ENCODE measurements at regions of chr5 and their contacts with region 1.

Region 1: GRCh38 chr5:45038366-45038987 is 229.7 kb downstream of the MRPS30 start:
- DNase-seq: no peak
- H3K4me3 Mint-ChIP-seq: no peak overlapping the region
- H3K27ac Mint-ChIP-seq: no peak overlapping the region
- H3K4me1 Mint-ChIP-seq: no peaks in the 10 kb centered on the region
- H3K27me3 Mint-ChIP-seq: no peaks in the 10 kb centered on the region

Region 2: DNA sequence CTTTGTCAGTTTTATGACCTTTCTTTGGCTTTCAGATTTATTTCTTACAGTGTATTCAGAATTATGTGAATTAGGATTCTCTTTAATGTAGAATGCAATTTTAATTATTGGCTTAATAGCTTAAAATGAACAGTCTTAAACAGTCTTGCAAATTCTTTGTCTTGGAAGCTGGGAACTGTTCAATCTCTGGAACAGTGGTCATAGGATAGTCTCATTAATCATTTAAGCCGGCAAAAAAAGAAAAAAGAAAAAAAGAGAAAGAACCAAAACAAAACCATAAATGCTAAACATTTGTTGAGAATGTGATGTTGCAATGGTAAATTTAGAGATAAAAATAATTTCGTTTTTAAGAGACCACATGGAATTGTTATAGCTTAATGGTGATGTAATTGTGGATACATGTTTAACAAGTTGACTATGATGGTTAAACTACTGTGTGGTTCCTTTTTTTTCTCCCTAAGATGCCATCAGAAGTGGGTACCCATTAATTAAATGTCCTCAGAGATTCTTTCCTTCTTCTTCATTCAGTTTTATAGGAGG is 1373.9 kb before region 1 on chr5:
- CTCF ChIA-PET with region 1: no interaction called
- intact Hi-C with region 1: no loop called
- DNase-seq: no peak
- H3K4me3 Mint-ChIP-seq: no peak overlapping the region
- H3K27ac Mint-ChIP-seq: no peak overlapping the region
- H3K4me1 Mint-ChIP-seq: no peaks in the 10 kb centered on the region
- H3K27me3 Mint-ChIP-seq: no peaks in the 10 kb centered on the region

Region 3: GRCh38 chr5:44632344-44632743 is 406.1 kb before region 1 on chr5:
- CTCF ChIA-PET with region 1: no interaction called
- intact Hi-C with region 1: no loop called
- DNase-seq: no peak
- H3K4me3 Mint-ChIP-seq: no peak overlapping the region
- H3K27ac Mint-ChIP-seq: no peak overlapping the region
- H3K4me1 Mint-ChIP-seq: no peaks in the 10 kb centered on the region
- H3K27me3 Mint-ChIP-seq: no peaks in the 10 kb centered on the region

Region 4: GRCh38 chr5:44927115-44927734 is 111.3 kb before region 1 on chr5:
- CTCF ChIA-PET with region 1: no interaction called
- intact Hi-C with region 1: no loop called
- DNase-seq: no peak
- H3K4me3 Mint-ChIP-seq: no peak overlapping the region
- H3K27ac Mint-ChIP-seq: no peak overlapping the region
- H3K4me1 Mint-ChIP-seq: peaks cover 2% of the 10 kb centered on the region
- H3K27me3 Mint-ChIP-seq: no peaks in the 10 kb centered on the region

Region 5: DNA sequence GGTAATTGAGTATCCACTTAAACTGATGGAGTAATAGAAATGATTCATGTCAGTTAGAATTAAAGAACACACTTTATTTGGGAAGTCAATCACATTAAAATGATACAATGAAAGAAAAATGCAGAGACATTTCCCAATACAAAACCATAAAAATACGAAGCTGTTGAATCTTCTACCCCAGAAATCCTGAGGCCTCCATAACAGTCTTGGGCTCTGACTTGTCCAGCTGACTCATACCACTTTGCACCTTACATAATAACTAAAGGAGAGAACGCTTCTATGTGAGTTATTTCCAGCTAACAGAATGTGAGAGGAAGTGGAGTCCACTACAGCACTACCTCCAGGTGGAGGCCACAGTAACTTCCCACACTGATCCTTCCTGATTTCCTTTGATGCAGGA is 75.2 kb after region 1 on chr5:
- CTCF ChIA-PET with region 1: no interaction called
- intact Hi-C with region 1: no loop called
- DNase-seq: no peak
- H3K4me3 Mint-ChIP-seq: no peak overlapping the region
- H3K27ac Mint-ChIP-seq: no peak overlapping the region
- H3K4me1 Mint-ChIP-seq: no peaks in the 10 kb centered on the region
- H3K27me3 Mint-ChIP-seq: no peaks in the 10 kb centered on the region

Region 6: DNA sequence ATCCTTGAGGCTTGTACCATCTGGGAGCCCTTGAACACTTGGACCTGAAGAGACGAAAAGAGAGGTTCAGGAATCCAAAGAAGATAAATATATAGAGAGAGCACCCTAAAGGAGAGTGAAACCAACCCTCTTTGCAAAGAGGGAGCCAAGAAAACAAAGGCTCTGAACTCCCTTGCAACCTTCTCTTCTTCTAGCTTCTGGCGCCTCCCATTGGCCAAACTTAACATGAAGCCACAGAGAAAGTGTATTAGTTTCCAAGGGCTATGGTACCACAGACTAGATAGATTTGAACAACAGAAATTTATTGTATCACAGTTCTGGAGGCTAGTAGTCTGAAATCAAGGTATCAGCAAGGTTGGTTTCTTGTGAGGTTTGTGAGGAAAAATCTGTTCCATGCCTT is 482.6 kb after region 1 on chr5:
- CTCF ChIA-PET with region 1: no interaction called
- intact Hi-C with region 1: loop called (anchors 2 kb)
- DNase-seq: peak; percentile 7
- H3K4me3 Mint-ChIP-seq: no peak overlapping the region
- H3K27ac Mint-ChIP-seq: no peak overlapping the region
- H3K4me1 Mint-ChIP-seq: no peaks in the 10 kb centered on the region
- H3K27me3 Mint-ChIP-seq: no peaks in the 10 kb centered on the region

Measured in activated naive CD4-positive, alpha-beta T cell treated with anti-CD3 and anti-CD28 coated beads for 36 hours (primary cell).